Activated T-helper 1 cell treated with anti-CD3 and anti-CD28 coated beads, Interleukin-12 subunit alpha, Interleukin-12 subunit beta, Interleukin-2, Interleukin-4 antibody, amounts not matched to agents 30 ng/mL and 10 ng/mL and 1 ng/mL, durations not matched to agents 14 hours and 24 hours and 36 hours (primary cell): ENCODE measurements at regions of chr11 and their contacts with region 1.

Region 1: GRCh38 chr11:59171508-59172322 is at the start of gene DTX4:
- DNase-seq: peak; percentile 84
- H3K4me3 Mint-ChIP-seq: peak within 1 kb of the TSS; percentile 85
- H3K27ac Mint-ChIP-seq: no peak within 1 kb of the TSS
- H3K4me1 Mint-ChIP-seq: peaks cover 8% of the 10 kb centered on the region
- H3K27me3 Mint-ChIP-seq: peaks cover 37% of the 10 kb centered on the region
- total RNA-seq, gene DTX4: 0.05 TPM in 2 replicates

Region 2: DNA sequence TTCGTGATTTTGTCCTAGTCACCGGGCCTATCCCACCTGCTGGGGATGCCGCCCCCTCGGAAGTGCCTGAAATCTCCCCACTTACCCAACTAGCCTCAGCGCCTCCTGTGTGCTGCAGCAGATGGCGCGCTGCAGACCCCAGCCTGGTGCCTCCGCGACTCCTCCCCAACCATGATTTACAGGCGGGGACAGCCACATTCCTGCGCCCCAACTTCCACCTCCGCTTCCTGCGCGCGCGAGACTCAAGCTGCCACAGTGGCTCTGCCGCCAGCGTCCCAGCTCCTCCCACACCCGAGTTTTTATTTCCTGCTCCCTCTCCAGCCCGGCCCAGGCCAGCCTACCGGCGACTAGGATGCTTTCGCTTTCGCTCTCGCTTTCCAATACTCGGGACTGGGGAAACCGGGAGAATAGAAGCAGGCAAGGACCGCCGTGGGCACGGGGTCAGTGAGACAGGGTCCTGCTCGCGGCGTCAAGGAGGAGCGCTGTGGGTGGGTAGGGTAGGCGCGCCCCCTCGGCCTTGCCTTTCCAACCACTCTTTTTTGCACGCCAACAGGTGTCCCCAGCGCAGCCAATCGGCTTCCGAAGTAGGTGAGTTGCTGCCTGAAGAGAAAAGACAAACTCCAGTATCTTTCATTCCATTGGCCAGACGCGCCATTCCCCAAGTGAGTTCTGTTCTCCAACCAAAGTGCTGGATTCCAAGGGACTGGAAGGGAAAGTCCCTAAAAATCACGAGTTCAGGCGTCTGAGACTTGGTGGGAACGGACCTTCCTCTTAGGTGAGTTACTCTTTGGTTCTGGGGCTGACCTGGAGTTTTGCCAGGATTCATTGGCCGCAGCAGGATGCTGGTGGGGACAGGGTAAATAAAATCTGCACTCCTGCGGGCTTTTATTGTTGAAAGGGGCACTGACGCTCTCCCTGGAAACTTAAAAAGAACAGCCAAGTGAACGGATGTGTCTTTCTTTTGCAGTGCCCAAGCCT is 28.9 kb before region 1 on chr11 and contains the start of gene FAM111A:
- intact Hi-C with region 1: loop called (anchors 1 kb)
- DNase-seq: peak; percentile 88
- H3K4me3 Mint-ChIP-seq: peak within 1 kb of the TSS; percentile 91
- H3K27ac Mint-ChIP-seq: peak within 1 kb of the TSS; percentile 93
- H3K4me1 Mint-ChIP-seq: peaks cover 62% of the 10 kb centered on the region
- H3K27me3 Mint-ChIP-seq: no peaks in the 10 kb centered on the region
- total RNA-seq, gene FAM111A: 64.8 and 66.4 TPM in 2 replicates

Region 3: GRCh38 chr11:59158206-59159068 is 13.3 kb before region 1 on chr11:
- intact Hi-C with region 1: loop called (anchors 1 kb)
- DNase-seq: peak; percentile 55
- H3K4me3 Mint-ChIP-seq: no peak overlapping the region
- H3K27ac Mint-ChIP-seq: peak overlapping the region; percentile 30
- H3K4me1 Mint-ChIP-seq: peaks cover 9% of the 10 kb centered on the region
- H3K27me3 Mint-ChIP-seq: peaks cover 11% of the 10 kb centered on the region

Region 4: GRCh38 chr11:59207988-59208451 is 36.3 kb after region 1 on chr11:
- intact Hi-C with region 1: loop called (anchors 1 kb)
- DNase-seq: peak; percentile 4
- H3K4me3 Mint-ChIP-seq: peak overlapping the region; percentile 51
- H3K27ac Mint-ChIP-seq: peak overlapping the region; percentile 83
- H3K4me1 Mint-ChIP-seq: peaks cover 30% of the 10 kb centered on the region
- H3K27me3 Mint-ChIP-seq: peaks cover 52% of the 10 kb centered on the region

Region 5: GRCh38 chr11:59240322-59240721 is 68.6 kb after region 1 on chr11:
- intact Hi-C with region 1: no loop called
- DNase-seq: no peak
- H3K4me3 Mint-ChIP-seq: no peak overlapping the region
- H3K27ac Mint-ChIP-seq: no peak overlapping the region
- H3K4me1 Mint-ChIP-seq: no peaks in the 10 kb centered on the region
- H3K27me3 Mint-ChIP-seq: peaks cover 6% of the 10 kb centered on the region

Region 6: GRCh38 chr11:59416613-59417012 is 244.9 kb after region 1 on chr11:
- intact Hi-C with region 1: no loop called
- DNase-seq: no peak
- H3K4me3 Mint-ChIP-seq: no peak overlapping the region
- H3K27ac Mint-ChIP-seq: no peak overlapping the region
- H3K4me1 Mint-ChIP-seq: no peaks in the 10 kb centered on the region
- H3K27me3 Mint-ChIP-seq: peaks cover 18% of the 10 kb centered on the region

Region 7: DNA sequence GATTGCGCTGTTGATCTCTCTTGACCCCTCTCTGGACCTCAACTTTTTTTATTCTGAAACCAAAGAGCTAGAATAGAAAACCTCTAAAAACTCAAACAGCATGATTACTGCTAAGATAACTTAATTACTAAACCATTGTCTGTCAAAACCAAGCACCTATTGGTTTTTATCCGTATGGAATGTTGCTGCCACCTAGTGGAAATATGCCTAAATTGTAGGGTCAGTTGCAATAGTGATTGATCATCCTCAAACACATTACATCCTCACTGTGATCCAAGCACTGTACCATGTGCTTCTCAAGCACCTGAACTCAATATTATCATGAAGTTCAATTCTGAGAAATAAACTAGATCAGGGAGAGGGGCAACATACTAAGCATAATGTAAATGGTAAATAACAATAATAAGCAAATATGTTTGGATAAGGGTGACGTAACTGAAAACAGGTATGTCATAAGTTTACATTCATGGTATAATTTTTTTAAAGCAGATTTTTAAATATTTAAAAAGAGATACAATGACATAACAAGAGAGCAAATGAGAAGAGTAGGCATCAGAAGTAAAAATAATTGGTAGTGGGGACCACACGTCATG is 258.3 kb after region 1 on chr11:
- intact Hi-C with region 1: loop called (anchors 1 kb)
- DNase-seq: peak; percentile 24
- H3K4me3 Mint-ChIP-seq: no peak overlapping the region
- H3K27ac Mint-ChIP-seq: no peak overlapping the region
- H3K4me1 Mint-ChIP-seq: no peaks in the 10 kb centered on the region
- H3K27me3 Mint-ChIP-seq: peaks cover 6% of the 10 kb centered on the region

Region 8: GRCh38 chr11:59523541-59523940 is 351.8 kb after region 1 on chr11:
- intact Hi-C with region 1: no loop called
- DNase-seq: no peak
- H3K4me3 Mint-ChIP-seq: no peak overlapping the region
- H3K27ac Mint-ChIP-seq: no peak overlapping the region
- H3K4me1 Mint-ChIP-seq: no peaks in the 10 kb centered on the region
- H3K27me3 Mint-ChIP-seq: peaks cover 15% of the 10 kb centered on the region

Region 9: DNA sequence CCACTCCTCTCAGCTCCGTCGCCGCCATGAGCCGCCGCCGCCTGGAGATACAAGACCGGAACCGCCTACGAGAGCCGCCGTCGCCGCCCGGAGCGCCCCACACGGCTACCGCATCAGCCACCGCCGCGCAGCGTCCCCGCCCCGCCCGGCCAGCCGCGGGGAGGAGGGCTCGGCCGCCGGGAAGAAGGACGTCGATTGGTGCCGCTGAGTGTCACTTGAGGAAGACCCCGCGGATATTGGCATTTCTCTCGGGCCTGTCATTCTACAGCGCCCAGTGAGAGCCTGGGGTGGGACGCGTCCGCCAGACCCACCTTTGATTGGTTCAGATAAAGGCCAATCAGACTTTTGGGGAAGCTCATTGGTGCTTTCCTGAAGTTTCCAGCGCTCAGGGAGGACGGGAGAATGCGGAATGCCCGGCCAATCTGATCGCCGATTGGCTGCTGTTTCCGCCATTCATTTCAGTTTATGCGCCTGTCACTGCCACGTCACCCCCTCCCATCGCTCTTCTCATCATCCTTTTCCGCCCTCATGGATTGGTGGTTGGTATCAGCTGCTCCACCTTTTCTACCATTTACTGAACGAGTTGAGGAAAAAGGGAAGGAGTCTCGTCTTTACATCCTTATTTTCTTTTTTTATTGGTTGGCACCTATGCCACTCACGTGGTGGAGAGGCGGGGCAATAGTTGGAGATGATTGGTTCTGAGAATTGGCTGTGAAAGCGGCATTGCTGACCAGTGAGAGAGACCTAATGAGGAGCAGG is 444.1 kb after region 1 on chr11 and contains the start of gene OSBP:
- intact Hi-C with region 1: loop called (anchors 2 kb)
- DNase-seq: peak; percentile 96
- H3K4me3 Mint-ChIP-seq: peak within 1 kb of the TSS; percentile 98
- H3K27ac Mint-ChIP-seq: peak within 1 kb of the TSS; percentile 96
- H3K4me1 Mint-ChIP-seq: peaks cover 37% of the 10 kb centered on the region
- H3K27me3 Mint-ChIP-seq: no peaks in the 10 kb centered on the region
- total RNA-seq, gene OSBP: 40.5 and 41.7 TPM in 2 replicates

Region 10: DNA sequence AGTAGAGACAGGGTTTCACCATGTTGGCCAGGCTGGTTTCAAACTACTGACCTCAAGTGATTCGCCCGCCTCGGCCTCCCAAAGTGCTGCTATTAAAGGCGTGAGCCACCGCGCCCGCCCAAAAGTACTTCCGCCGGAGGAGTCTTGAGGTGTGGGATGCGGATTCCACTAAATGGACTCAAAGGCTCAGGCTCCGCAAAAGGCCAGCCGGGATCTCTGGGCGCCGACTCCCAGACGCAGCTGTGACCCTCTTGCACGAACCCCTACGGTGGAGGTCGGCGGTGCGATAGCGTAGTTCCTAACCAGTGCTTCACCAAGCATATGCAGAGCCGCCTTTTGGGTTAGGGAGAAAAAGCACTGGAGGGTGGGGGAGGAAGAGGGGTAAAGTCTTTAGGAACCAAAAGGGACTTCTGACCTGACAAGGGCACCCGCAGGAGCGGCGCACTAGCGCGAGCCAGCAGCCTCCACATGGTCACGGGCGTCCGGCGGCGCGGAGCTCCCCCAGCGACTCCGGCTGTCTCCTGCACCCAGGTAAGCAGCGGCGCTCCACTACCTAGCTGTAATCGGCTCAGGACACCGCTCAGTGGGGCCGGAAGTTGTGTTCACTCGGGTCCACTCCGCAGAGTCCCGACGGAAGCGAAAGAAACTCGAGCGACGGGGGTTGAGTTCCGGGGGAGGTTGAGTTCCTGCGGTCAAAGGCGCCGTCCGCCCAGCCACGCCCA is 638.6 kb after region 1 on chr11 and contains the start of gene MRPL16:
- intact Hi-C with region 1: loop called (anchors 2 kb)
- DNase-seq: peak; percentile 82
- H3K4me3 Mint-ChIP-seq: peak within 1 kb of the TSS; percentile 96
- H3K27ac Mint-ChIP-seq: peak within 1 kb of the TSS; percentile 91
- H3K4me1 Mint-ChIP-seq: peaks cover 28% of the 10 kb centered on the region
- H3K27me3 Mint-ChIP-seq: no peaks in the 10 kb centered on the region
- total RNA-seq, gene MRPL16: 88.3 and 93.9 TPM in 2 replicates